Activated T-helper 2 cell treated with anti-CD3 and anti-CD28 coated beads, Interferon-gamma antibody, Interleukin-2, Interleukin-4, amounts not matched to agents 10 μg/mL and 5 μg/mL and 100 μg/mL, durations not matched to agents 14 hours and 24 hours and 36 hours (primary cell): ENCODE measurements at regions of chr18 and their contacts with region 1.

Region 1: DNA sequence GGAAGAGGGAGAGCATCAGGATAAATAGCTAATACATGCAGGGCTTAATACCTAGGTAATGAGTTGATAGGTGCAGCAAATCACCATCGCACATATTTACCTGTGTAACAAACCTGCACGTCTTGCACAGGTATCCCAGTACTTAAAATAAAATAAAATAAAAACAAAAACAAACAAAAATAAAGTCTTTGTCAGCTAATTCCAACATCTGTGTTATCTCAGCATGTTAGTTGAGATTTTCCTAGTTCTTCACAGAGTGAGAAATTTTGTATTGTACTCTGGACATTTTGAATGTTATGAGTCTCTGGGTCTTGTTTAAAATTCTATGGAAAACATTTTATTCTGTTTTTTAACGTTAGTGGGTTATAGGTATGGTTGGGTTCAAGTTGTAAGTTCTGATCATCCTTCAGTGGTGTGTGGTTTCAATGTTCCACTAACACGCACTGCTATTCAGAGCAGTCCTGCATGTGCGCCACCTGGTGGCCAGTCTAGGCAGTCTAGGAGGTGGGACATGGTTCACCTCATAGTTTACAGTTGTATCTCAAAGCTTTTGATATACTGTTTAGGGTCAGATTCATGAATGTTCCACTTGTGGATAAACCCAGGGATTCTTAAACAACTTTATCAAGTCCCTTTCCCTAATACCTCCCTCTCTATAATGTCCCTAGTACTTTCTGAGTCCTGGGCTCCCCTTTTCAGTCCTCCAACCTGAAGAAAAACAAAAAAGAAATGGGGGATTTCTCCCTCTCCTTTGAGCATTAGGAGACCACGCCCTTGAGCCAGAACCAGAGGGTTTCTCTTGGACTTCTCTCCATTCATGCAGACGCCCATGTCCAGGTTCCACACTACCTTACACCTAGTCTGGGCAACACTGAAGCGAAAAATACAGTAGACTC is 213.4 kb upstream of the GATA6 start:
- DNase-seq: peak; percentile 56
- H3K4me3 Mint-ChIP-seq: no peak overlapping the region
- H3K27ac Mint-ChIP-seq: no peak overlapping the region
- H3K4me1 Mint-ChIP-seq: no peaks in the 10 kb centered on the region
- H3K27me3 Mint-ChIP-seq: peaks cover 8% of the 10 kb centered on the region

Region 2: GRCh38 chr18:21194871-21195771 is 760.9 kb before region 1 on chr18:
- intact Hi-C with region 1: loop called (anchors 1 kb)
- DNase-seq: no peak
- H3K4me3 Mint-ChIP-seq: no peak overlapping the region
- H3K27ac Mint-ChIP-seq: no peak overlapping the region
- H3K4me1 Mint-ChIP-seq: no peaks in the 10 kb centered on the region
- H3K27me3 Mint-ChIP-seq: peaks cover 10% of the 10 kb centered on the region

Region 3: DNA sequence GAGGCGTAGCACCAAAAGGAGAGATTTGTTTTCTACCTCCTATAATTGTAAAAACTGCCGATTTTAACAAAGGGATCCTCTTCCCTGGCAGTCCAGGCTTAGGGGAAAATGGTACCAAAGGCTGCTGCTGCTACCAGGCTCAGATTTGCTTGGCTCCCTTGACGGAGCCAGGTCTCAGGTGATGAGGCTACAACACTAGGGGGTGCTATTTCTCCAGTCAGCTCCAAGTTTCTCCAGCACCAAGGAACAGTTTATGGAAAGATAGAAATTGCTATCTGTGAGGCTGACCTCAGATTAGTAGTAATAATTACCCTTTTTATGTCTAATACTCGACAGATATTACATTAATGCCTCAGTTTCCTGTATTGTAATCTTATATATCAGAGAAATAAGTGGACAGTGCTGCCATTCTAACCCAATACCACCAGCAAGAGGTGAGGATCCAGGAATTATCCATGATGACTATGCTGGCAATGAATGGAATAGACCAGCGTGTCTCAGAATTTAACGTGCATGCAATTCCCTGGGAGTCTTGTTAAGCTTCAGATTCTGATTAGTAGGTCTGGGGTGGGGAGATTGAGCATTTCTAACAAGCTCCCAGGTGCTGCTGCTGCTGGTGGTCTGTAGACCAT is 466.8 kb before region 1 on chr18:
- intact Hi-C with region 1: loop called (anchors 1 kb)
- DNase-seq: no peak
- H3K4me3 Mint-ChIP-seq: no peak overlapping the region
- H3K27ac Mint-ChIP-seq: no peak overlapping the region
- H3K4me1 Mint-ChIP-seq: no peaks in the 10 kb centered on the region
- H3K27me3 Mint-ChIP-seq: peaks cover 6% of the 10 kb centered on the region

Region 4: GRCh38 chr18:21897811-21898210 is 58.2 kb before region 1 on chr18:
- intact Hi-C with region 1: loop called (anchors 1 kb)
- DNase-seq: no peak
- H3K4me3 Mint-ChIP-seq: no peak overlapping the region
- H3K27ac Mint-ChIP-seq: no peak overlapping the region
- H3K4me1 Mint-ChIP-seq: peaks cover 4% of the 10 kb centered on the region
- H3K27me3 Mint-ChIP-seq: peaks cover 3% of the 10 kb centered on the region

Region 5: DNA sequence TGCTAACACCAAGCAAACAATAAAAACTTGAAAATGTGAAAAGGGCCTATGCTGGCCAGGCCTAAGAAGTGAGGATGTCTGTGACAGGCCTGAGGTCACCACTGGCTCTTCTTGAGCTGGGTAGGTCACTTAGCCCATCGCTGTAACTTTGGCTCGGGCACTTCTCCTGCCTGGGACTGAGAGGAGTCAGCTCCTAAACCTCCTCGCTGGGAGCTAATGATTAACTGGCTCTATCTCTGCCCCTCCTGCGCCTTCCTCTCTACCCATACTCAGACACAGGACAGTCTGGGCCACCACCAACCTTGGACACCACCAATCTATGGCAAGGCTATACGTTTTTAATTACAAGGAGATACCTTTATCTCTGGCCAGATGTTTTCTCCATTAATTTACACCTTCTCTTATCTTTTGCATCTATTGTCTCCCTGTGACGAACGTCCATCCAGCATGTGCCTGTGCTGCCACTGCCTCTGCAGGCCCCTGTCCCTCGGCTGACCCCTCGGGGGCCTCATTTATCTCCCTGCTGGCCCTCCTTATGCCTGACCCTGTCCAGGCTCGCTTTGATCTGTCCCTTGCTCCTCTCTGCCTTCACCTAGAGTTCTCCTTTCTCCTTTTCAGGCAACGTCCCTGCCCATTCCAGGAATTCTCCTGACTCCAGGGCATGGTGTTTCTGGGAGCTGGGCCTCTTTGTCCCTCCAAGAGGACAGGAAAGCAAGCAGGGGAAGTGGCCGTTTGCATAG is 64.3 kb after region 1 on chr18:
- intact Hi-C with region 1: no loop called
- DNase-seq: no peak
- H3K4me3 Mint-ChIP-seq: no peak overlapping the region
- H3K27ac Mint-ChIP-seq: no peak overlapping the region
- H3K4me1 Mint-ChIP-seq: no peaks in the 10 kb centered on the region
- H3K27me3 Mint-ChIP-seq: no peaks in the 10 kb centered on the region

Region 6: GRCh38 chr18:22032392-22032961 is 76.5 kb after region 1 on chr18:
- intact Hi-C with region 1: no loop called
- DNase-seq: no peak
- H3K4me3 Mint-ChIP-seq: no peak overlapping the region
- H3K27ac Mint-ChIP-seq: no peak overlapping the region
- H3K4me1 Mint-ChIP-seq: no peaks in the 10 kb centered on the region
- H3K27me3 Mint-ChIP-seq: no peaks in the 10 kb centered on the region

Region 7: GRCh38 chr18:23805898-23806297 is 1849.9 kb after region 1 on chr18:
- intact Hi-C with region 1: no loop called
- DNase-seq: no peak
- H3K4me3 Mint-ChIP-seq: no peak overlapping the region
- H3K27ac Mint-ChIP-seq: no peak overlapping the region
- H3K4me1 Mint-ChIP-seq: peaks cover 8% of the 10 kb centered on the region
- H3K27me3 Mint-ChIP-seq: peaks cover 30% of the 10 kb centered on the region